Ascending aorta (tissue), 2 donors: ENCODE measurements at regions of chr3 and their contacts with region 1.

Region 1: DNA sequence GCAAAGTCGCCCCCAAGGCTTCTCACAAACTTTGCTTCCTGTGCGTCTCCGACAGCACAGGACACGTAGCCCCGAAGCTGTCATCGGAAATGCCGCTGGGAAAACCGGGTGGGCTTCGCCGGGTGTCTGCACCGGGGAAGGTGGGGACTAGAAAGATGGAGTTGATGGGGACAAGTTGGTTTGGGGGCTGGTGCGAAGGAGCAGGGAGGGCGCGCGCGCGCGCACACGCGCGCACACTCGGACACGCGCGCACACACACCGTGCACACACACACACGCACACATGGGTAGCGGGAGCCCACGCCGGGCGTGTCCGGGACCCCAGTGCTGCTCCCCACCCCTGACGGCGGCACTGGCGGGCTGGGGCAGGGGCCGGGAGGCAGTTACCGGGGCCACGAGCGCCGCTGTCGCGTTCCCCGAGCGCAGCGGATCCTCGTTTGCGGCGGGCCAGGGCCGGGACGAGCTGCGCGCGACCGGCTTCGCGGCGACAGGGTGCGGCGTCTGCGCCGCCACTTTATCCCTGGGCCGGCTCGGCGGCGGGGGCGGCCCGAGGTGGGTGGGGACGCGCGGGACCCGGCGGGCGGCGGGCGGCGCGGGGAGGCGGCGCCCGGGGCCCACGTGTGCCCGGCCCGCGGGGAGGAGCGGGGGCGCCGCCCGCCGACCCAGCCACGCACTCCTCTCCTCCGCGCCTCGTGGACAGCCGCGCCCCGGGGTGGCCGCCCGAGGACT is 547 bp upstream of the MGLL start:
- DNase-seq: peak in 1 of 2 donors; percentile 81
- H3K4me3 ChIP-seq: peak overlapping the region; percentile 79 to 99
- H3K27ac ChIP-seq: peak overlapping the region; percentile 86 to 88
- H3K4me1 ChIP-seq: peaks cover 0 to 4% of the 10 kb centered on the region in 2 donors
- H3K27me3 ChIP-seq: no peaks in the 10 kb centered on the region
- CTCF ChIP-seq: peak in 1 of 3 experiments; percentile 75

Region 2: DNA sequence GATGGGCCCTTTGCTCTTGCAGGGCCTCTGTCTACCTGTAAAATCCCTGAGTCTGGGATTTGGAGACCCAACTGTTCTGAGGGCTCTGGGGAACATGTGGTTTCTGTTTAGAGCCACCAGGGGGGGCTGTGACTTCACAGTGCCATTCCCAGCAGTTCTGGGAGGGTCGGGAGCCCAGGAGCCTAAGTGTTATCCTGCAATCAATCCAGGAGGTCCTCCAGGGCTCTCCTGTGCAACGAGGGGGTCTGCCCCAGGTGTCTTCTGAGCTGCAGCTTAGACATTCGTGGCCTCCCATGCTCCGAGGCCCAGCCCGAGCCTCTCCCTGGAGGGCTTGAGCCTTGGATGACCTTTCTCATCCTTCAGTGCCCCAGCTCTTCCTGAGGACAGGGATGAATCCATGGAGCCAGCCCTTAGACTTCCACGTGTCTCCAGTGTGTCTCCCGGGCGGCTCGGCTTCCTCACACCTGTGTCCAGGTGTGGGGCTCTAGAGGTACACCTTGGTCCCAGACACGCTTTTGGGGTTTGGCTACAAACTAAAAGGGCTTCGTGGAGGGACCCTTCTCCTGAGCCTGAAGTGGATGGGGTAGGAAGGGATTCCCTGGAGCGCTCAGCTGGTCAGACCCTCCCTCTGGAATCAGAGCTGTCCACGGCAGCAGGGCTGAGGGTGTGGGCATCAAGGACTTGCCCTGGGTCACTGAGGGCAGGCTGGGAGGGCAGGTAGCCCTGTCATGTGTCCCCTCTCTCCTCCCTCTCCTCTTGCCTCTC is 170.4 kb before region 1 on chr3:
- intact Hi-C with region 1: loop called (anchors 2 kb)
- DNase-seq: peak in 1 of 2 donors; percentile 70
- H3K4me3 ChIP-seq: no peak overlapping the region
- H3K27ac ChIP-seq: no peak overlapping the region
- H3K4me1 ChIP-seq: peaks cover 0 to 17% of the 10 kb centered on the region in 2 donors
- H3K27me3 ChIP-seq: no peaks in the 10 kb centered on the region
- CTCF ChIP-seq: peak; percentile 89 to 94 (median 91)

Region 3: GRCh38 chr3:127690823-127691452 is 131.9 kb before region 1 on chr3:
- intact Hi-C with region 1: loop called (anchors 2 kb)
- DNase-seq: no peak
- H3K4me3 ChIP-seq: no peak overlapping the region
- H3K27ac ChIP-seq: peak overlapping the region; percentile 85 to 89
- H3K4me1 ChIP-seq: peaks cover 29 to 32% of the 10 kb centered on the region in 2 donors
- H3K27me3 ChIP-seq: no peaks in the 10 kb centered on the region
- CTCF ChIP-seq: peak; percentile 60 to 73 (median 71)

Region 4: GRCh38 chr3:127762077-127762786 is 60.6 kb before region 1 on chr3:
- intact Hi-C with region 1: loop called (anchors 5 kb)
- DNase-seq: peak in 1 of 2 donors; percentile 79
- H3K4me3 ChIP-seq: peak overlapping the region; percentile 18 to 56
- H3K27ac ChIP-seq: peak overlapping the region; percentile 76 to 82
- H3K4me1 ChIP-seq: peaks cover 9 to 21% of the 10 kb centered on the region in 2 donors
- H3K27me3 ChIP-seq: no peaks in the 10 kb centered on the region
- CTCF ChIP-seq: no peak

Region 5: GRCh38 chr3:127772827-127773720 is 49.8 kb before region 1 on chr3:
- intact Hi-C with region 1: no loop called
- DNase-seq: no peak
- H3K4me3 ChIP-seq: no peak overlapping the region
- H3K27ac ChIP-seq: no peak overlapping the region
- H3K4me1 ChIP-seq: peaks cover 9 to 27% of the 10 kb centered on the region in 2 donors
- H3K27me3 ChIP-seq: no peaks in the 10 kb centered on the region
- CTCF ChIP-seq: no peak

Region 6: GRCh38 chr3:127953091-127954035 is 130.5 kb after region 1 on chr3:
- intact Hi-C with region 1: loop called (anchors 5 kb)
- DNase-seq: no peak
- H3K4me3 ChIP-seq: no peak overlapping the region
- H3K27ac ChIP-seq: peak overlapping the region; percentile 58 to 66
- H3K4me1 ChIP-seq: peaks cover 0 to 20% of the 10 kb centered on the region in 2 donors
- H3K27me3 ChIP-seq: no peaks in the 10 kb centered on the region
- CTCF ChIP-seq: no peak